Activated naive CD8-positive, alpha-beta T cell treated with anti-CD3 and anti-CD28 coated beads, Interleukin-2, amount 10 ng/mL, durations not matched to agents 7 days and 5 days (primary cell): ENCODE measurements at regions of chr12 and their contacts with region 1.

Region 1: GRCh38 chr12:12696562-12697383 is 790 bp upstream of the GPR19 start:
- DNase-seq: peak; percentile 93
- ATAC-seq: peak; percentile 86
- H3K4me3 Mint-ChIP-seq: peak overlapping the region; percentile 95
- H3K27ac Mint-ChIP-seq: peak overlapping the region; percentile 99
- H3K4me1 Mint-ChIP-seq: peaks cover 41% of the 10 kb centered on the region
- H3K27me3 Mint-ChIP-seq: no peaks in the 10 kb centered on the region

Region 2: DNA sequence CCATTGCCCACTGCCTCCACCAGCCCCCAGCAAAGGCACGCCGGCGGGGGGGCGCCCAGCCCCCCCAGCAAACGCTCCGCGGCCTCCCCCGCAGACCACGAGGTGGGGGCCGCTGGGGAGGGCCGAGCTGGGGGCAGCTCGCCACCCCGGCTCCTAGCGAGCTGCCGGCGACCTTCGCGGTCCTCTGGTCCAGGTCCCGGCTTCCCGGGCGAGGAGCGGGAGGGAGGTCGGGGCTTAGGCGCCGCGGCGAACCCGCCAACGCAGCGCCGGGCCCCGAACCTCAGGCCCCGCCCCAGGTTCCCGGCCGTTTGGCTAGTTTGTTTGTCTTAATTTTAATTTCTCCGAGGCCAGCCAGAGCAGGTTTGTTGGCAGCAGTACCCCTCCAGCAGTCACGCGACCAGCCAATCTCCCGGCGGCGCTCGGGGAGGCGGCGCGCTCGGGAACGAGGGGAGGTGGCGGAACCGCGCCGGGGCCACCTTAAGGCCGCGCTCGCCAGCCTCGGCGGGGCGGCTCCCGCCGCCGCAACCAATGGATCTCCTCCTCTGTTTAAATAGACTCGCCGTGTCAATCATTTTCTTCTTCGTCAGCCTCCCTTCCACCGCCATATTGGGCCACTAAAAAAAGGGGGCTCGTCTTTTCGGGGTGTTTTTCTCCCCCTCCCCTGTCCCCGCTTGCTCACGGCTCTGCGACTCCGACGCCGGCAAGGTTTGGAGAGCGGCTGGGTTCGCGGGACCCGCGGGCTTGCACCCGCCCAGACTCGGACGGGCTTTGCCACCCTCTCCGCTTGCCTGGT is 20.2 kb after region 1 on chr12 and contains the start of gene CDKN1B:
- POLR2A ChIA-PET with region 1: interaction called, 304 read pairs
- DNase-seq: peak; percentile 88
- ATAC-seq: peak; percentile 55
- H3K4me3 Mint-ChIP-seq: peak within 1 kb of the TSS; percentile 96
- H3K27ac Mint-ChIP-seq: peak within 1 kb of the TSS; percentile 98
- H3K4me1 Mint-ChIP-seq: peaks cover 41% of the 10 kb centered on the region
- H3K27me3 Mint-ChIP-seq: no peaks in the 10 kb centered on the region
- total RNA-seq, gene CDKN1B: 135 to 136 TPM

Region 3: GRCh38 chr12:12724661-12725545 is 28.1 kb after region 1 on chr12:
- POLR2A ChIA-PET with region 1: interaction called, 304 read pairs
- DNase-seq: peak; percentile 89
- ATAC-seq: peak; percentile 51
- H3K4me3 Mint-ChIP-seq: peak overlapping the region; percentile 85
- H3K27ac Mint-ChIP-seq: peak overlapping the region; percentile 94
- H3K4me1 Mint-ChIP-seq: peaks cover 30% of the 10 kb centered on the region
- H3K27me3 Mint-ChIP-seq: no peaks in the 10 kb centered on the region